ENCODE measurements at regions of chr19 and their contacts with region 1.

Region 1: GRCh38 chr19:44113138-44113783 is at the start of gene ZNF225:
- DNase-seq: peak; percentile 80 to 85 (median 84)
- H3K4me3 ChIP-seq: peak within 1 kb of the TSS; percentile 92 to 96
- H3K4me3 Mint-ChIP-seq: peak within 1 kb of the TSS; percentile 96 to 100 (median 99)
- H3K27ac ChIP-seq: peak within 1 kb of the TSS; percentile 30
- H3K27ac Mint-ChIP-seq: peak within 1 kb of the TSS; percentile 75 to 98 (median 94)
- H3K4me1 ChIP-seq: peaks cover 19% of the 10 kb centered on the region
- H3K4me1 Mint-ChIP-seq: peaks cover 9 to 40% (median 23%) of the 10 kb centered on the region in 4 donors
- H3K27me3 ChIP-seq: no peaks in the 10 kb centered on the region
- H3K27me3 Mint-ChIP-seq: no peaks in the 10 kb centered on the region
- total RNA-seq, gene ZNF225: 10.7 to 13.9 TPM

Region 2: GRCh38 chr19:44093931-44094765 is 19.1 kb before region 1 on chr19 and contains the start of gene ZNF224:
- CTCF ChIA-PET with region 1: interaction called, 3 read pairs
- POLR2A ChIA-PET with region 1: interaction called, 24 read pairs
- intact Hi-C with region 1: loop called (anchors 1 kb)
- DNase-seq: peak; percentile 73 to 84 (median 76)
- H3K4me3 ChIP-seq: peak within 1 kb of the TSS; percentile 65 to 75
- H3K4me3 Mint-ChIP-seq: peak within 1 kb of the TSS; percentile 85 to 99 (median 98)
- H3K27ac ChIP-seq: peak within 1 kb of the TSS; percentile 69
- H3K27ac Mint-ChIP-seq: peak within 1 kb of the TSS; percentile 58 to 97 (median 90)
- H3K4me1 ChIP-seq: peaks cover 9% of the 10 kb centered on the region
- H3K4me1 Mint-ChIP-seq: peaks cover 9 to 33% (median 23%) of the 10 kb centered on the region in 4 donors
- H3K27me3 ChIP-seq: no peaks in the 10 kb centered on the region
- H3K27me3 Mint-ChIP-seq: no peaks in the 10 kb centered on the region
- total RNA-seq, gene ZNF224: 86.9 to 91.2 TPM

Region 3: GRCh38 chr19:44164673-44165512 is 51.6 kb after region 1 on chr19 and contains the start of gene ZNF226:
- CTCF ChIA-PET with region 1: no interaction called
- POLR2A ChIA-PET with region 1: interaction called, 6 read pairs
- intact Hi-C with region 1: loop called (anchors 1 kb)
- DNase-seq: peak; percentile 76 to 84 (median 82)
- H3K4me3 ChIP-seq: peak within 1 kb of the TSS; percentile 75 to 81
- H3K4me3 Mint-ChIP-seq: peak within 1 kb of the TSS; percentile 94 to 98 (median 98)
- H3K27ac ChIP-seq: peak within 1 kb of the TSS; percentile 68
- H3K27ac Mint-ChIP-seq: peak within 1 kb of the TSS; percentile 82 to 98 (median 96)
- H3K4me1 ChIP-seq: peaks cover 23% of the 10 kb centered on the region
- H3K4me1 Mint-ChIP-seq: peaks cover 21 to 34% (median 27%) of the 10 kb centered on the region in 4 donors
- H3K27me3 ChIP-seq: no peaks in the 10 kb centered on the region
- H3K27me3 Mint-ChIP-seq: peaks cover 0 to 1% of the 10 kb centered on the region in 2 donors
- total RNA-seq, gene ZNF226: 51.0 to 55.6 TPM

Region 4: GRCh38 chr19:44212250-44212865 is 99.1 kb after region 1 on chr19 and contains the start of gene ZNF227:
- CTCF ChIA-PET with region 1: no interaction called
- POLR2A ChIA-PET with region 1: interaction called, 4 read pairs
- intact Hi-C with region 1: loop called (anchors 1 kb)
- DNase-seq: peak; percentile 73 to 86 (median 79)
- H3K4me3 ChIP-seq: peak within 1 kb of the TSS; percentile 52 to 93
- H3K4me3 Mint-ChIP-seq: peak within 1 kb of the TSS; percentile 96 to 99 (median 98)
- H3K27ac ChIP-seq: peak within 1 kb of the TSS; percentile 78
- H3K27ac Mint-ChIP-seq: peak within 1 kb of the TSS; percentile 85 to 99 (median 97)
- H3K4me1 ChIP-seq: peaks cover 17% of the 10 kb centered on the region
- H3K4me1 Mint-ChIP-seq: peaks cover 20 to 34% (median 23%) of the 10 kb centered on the region in 4 donors
- H3K27me3 ChIP-seq: no peaks in the 10 kb centered on the region
- H3K27me3 Mint-ChIP-seq: no peaks in the 10 kb centered on the region
- total RNA-seq, gene ZNF227: 51.6 to 54.4 TPM

Region 5: GRCh38 chr19:44332145-44332544 is 218.9 kb after region 1 on chr19:
- CTCF ChIA-PET with region 1: no interaction called
- POLR2A ChIA-PET with region 1: no interaction called
- intact Hi-C with region 1: no loop called
- DNase-seq: no peak
- H3K4me3 ChIP-seq: no peak overlapping the region
- H3K4me3 Mint-ChIP-seq: no peak overlapping the region
- H3K27ac ChIP-seq: no peak overlapping the region
- H3K27ac Mint-ChIP-seq: no peak overlapping the region
- H3K4me1 ChIP-seq: no peaks in the 10 kb centered on the region
- H3K4me1 Mint-ChIP-seq: no peaks in the 10 kb centered on the region
- H3K27me3 ChIP-seq: no peaks in the 10 kb centered on the region
- H3K27me3 Mint-ChIP-seq: peaks cover 2 to 4% of the 10 kb centered on the region in 2 donors